BJ (cell line): ENCODE measurements at regions of chr6 and their contacts with region 1.

Region 1: GRCh38 chr6:158194487-158195280 is 26.5 kb downstream of the GTF2H5 start:
- DNase-seq: no peak
- H3K4me3 ChIP-seq: no peak overlapping the region
- H3K27me3 ChIP-seq: no peaks in the 10 kb centered on the region
- CTCF ChIP-seq: no peak

Region 2: GRCh38 chr6:158207422-158207788 is 12.7 kb after region 1 on chr6:
- CTCF ChIA-PET with region 1: interaction called, 11 read pairs
- POLR2A ChIA-PET with region 1: no interaction called
- DNase-seq: no peak
- H3K4me3 ChIP-seq: no peak overlapping the region
- H3K27me3 ChIP-seq: peaks cover 2% of the 10 kb centered on the region; the same call in 1 of the 2 replicates
- CTCF ChIP-seq: no peak

Region 3: DNA sequence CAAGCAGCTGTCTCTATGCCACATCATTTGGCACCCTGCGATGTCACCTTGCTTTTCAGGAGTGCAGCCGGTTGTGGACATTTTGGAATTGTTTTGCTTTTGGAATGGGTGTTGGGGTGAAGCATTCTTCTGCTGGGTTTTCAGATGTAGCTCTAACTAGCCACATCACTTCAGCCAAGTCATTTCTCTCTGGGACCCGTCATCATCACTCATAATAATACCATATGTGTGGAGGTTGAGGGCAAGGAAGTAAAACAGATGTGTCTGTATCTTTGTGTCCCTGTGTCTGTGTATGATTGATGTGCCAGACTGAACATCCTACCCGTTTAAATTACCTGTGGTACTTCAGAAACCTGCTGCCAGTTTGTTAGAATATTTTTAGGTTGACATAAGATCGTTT is 68.1 kb after region 1 on chr6:
- CTCF ChIA-PET with region 1: no interaction called
- POLR2A ChIA-PET with region 1: no interaction called
- DNase-seq: no peak
- H3K4me3 ChIP-seq: no peak overlapping the region
- H3K27me3 ChIP-seq: no peaks in the 10 kb centered on the region
- CTCF ChIP-seq: no peak